ENCODE measurements at regions of chr12 and their contacts with region 1.

Region 1: DNA sequence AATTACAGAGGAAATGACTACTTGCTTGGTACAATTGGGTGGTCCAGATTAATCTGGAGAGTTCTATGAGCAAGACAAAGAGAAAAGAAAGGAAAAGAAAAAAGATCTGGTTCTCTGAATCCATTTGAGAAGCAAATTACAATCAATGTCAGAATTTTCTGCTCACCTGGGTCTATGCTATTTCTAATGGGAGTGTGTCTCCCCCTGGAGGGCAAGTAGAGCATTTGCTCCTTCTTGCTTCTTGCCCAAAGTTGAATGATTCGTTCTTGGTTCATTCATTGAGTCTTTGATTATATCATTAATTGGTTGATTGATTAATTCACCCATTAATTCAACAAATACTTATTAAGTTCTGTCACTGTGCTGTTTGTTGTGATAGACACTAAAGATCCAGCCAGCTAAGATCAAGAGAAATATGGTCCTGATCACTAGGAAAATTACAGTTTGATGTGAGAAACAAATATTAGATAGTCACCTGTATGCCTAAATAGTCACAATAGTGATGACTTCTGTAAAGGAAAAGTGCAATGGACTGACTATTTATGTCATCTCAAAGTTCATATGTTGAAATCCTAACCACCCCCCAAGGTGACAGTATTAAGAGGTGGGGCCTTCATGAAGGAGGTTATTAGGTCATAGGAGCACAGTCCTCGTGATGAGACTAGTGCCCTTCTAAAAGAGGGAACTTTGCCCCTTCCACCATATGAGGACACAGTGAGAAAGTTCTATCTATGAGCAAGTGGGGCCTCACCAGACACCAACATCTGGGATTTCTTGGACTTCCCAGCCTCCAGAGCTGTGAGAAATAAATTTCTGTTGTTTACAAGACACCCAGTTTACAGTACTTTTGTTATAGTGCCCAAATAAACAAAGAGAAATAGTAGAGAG is 8.0 kb upstream of the ASB8 start:
- DNase-seq: peak in 1 of 2 donors; percentile 25
- H3K4me3 ChIP-seq: no peak overlapping the region
- H3K27ac ChIP-seq: no peak overlapping the region
- H3K4me1 ChIP-seq: no peaks in the 10 kb centered on the region
- H3K27me3 ChIP-seq: no peaks in the 10 kb centered on the region
- CTCF ChIP-seq: peak; percentile 62 to 89 (median 86)
- POLR2A ChIP-seq: no peak

Region 2: DNA sequence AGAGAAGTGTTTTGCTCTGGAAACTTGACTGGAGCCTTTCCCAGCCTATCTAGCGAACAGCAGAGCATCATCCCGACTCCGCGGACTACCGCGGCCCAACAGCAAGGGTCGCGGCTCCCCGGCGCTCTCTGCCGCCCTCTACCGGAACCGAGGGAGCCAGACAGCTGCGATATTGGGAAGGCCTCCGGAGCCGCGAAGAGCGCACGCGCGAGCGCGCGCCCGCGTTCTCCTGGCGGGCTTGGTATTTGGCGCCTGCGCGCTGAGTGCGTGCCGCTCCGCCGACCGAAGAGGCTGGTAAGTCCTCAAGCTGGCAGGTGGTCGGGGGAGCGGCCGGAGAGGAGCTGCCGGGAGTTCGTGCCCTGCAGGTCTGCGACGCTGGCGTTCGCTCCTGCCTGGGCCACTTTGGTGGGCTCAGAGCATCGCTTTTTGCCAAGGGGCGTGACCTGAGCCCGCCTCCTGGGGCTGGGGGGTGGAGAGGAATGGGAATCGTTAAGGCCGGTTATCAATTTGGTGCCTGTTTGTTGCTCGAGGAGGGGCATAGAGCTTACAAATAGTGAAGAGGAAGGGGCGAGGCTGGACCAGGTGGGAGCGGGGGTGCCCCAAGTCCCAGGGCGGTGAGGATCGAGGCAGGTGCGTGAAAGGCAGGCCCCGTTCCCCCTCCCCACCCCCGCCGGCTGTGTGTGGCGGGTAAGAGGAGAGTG is 201.8 kb before region 1 on chr12 and contains the start of gene TMEM106C:
- intact Hi-C with region 1: loop called (anchors 10 kb)
- DNase-seq: peak; percentile 92 to 94
- H3K4me3 ChIP-seq: peak within 1 kb of the TSS; percentile 24 to 67 (median 25)
- H3K27ac ChIP-seq: peak within 1 kb of the TSS in 1 of 3 donors; percentile 23
- H3K4me1 ChIP-seq: peaks cover 4 to 5% of the 10 kb centered on the region in 2 donors
- H3K27me3 ChIP-seq: no peaks in the 10 kb centered on the region
- CTCF ChIP-seq: peak; percentile 79 to 100 (median 98)
- POLR2A ChIP-seq: peak; percentile 6 to 62
- total RNA-seq, gene TMEM106C: 52.9 to 112 (median 79.1) TPM

Region 3: GRCh38 chr12:48061948-48062719 is 103.2 kb before region 1 on chr12:
- intact Hi-C with region 1: no loop called
- DNase-seq: no peak
- H3K4me3 ChIP-seq: no peak overlapping the region
- H3K27ac ChIP-seq: no peak overlapping the region
- H3K4me1 ChIP-seq: no peaks in the 10 kb centered on the region
- H3K27me3 ChIP-seq: no peaks in the 10 kb centered on the region
- CTCF ChIP-seq: no peak
- POLR2A ChIP-seq: no peak

Region 4: DNA sequence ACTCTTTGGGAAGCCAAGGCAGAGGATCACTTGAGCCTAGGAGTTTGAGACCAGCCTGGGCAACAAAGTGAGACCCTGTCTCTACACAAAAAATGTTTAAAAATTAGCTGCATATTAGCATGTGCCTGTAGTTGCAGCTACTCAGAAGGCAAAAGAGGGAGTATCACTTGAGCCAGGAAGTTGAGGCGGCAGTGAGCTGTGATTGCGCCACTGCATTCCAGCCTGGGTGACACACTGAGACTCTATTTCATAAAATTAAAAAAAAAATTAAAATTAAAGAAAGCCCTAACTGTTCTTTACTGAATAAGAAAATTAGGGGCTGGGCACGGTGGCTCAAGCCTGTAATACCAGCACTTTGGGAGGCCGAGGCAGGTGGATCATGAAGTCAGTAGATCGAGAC is 86.4 kb before region 1 on chr12:
- intact Hi-C with region 1: no loop called
- DNase-seq: no peak
- H3K4me3 ChIP-seq: no peak overlapping the region
- H3K27ac ChIP-seq: no peak overlapping the region
- H3K4me1 ChIP-seq: no peaks in the 10 kb centered on the region
- H3K27me3 ChIP-seq: no peaks in the 10 kb centered on the region
- CTCF ChIP-seq: no peak
- POLR2A ChIP-seq: no peak